Left cardiac atrium (tissue), 4 donors: ENCODE measurements at regions of chr1 and their contacts with region 1.

Region 1: DNA sequence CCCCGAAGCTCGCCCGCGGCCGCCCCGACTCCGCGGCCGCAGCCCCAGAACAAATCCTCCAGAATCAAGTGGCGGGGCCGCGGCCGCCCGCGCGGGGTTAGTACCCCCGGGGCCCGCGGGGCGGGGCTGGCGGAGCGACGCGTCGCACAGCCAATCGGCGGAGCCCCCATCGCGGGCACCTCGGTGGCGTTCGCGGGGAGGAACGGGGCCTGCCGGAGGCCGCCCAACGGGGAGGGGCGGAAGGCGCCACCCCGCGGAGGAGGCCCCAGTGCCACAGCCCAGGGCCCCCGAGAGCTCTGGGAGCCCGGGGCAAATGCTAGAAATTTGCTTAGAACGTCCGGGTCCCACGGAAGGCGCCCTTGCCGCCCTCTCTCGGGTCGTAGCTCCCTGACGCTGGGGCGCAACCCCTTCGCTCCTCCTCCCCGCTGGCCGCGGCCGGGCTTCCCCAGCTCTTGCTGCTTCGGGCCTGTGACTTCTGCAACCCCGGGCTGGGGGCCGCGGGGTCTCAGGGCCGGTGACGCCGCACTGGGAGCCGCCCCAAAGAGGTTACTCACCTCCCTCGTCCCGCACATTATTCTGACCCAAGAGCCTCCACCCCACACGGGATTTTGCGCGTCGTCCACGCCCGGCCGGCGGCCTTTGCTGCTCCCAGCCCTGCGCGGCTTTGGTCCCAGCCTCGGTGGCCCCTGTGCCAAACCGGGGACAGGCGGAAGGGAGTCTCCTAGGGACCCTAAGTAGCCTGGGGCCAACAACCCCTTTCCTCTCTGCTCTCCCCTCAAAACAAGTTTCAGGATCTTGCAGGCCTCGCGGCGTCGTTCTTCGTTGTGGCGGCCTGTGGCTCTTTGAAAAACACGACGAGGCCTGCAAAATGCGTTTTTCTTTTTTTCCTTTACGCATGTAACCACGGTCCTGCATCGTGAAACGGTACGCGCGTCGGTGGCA is at the start of gene RUNX3:
- DNase-seq: peak; percentile 67
- ATAC-seq: peak; percentile 68 to 71
- total RNA-seq, gene RUNX3: 1.3 to 2.4 TPM

Region 2: GRCh38 chr1:24910751-24911650 is 19.5 kb before region 1 on chr1:
- intact Hi-C with region 1: no loop called
- DNase-seq: no peak
- ATAC-seq: peak; percentile 20 to 48

Region 3: DNA sequence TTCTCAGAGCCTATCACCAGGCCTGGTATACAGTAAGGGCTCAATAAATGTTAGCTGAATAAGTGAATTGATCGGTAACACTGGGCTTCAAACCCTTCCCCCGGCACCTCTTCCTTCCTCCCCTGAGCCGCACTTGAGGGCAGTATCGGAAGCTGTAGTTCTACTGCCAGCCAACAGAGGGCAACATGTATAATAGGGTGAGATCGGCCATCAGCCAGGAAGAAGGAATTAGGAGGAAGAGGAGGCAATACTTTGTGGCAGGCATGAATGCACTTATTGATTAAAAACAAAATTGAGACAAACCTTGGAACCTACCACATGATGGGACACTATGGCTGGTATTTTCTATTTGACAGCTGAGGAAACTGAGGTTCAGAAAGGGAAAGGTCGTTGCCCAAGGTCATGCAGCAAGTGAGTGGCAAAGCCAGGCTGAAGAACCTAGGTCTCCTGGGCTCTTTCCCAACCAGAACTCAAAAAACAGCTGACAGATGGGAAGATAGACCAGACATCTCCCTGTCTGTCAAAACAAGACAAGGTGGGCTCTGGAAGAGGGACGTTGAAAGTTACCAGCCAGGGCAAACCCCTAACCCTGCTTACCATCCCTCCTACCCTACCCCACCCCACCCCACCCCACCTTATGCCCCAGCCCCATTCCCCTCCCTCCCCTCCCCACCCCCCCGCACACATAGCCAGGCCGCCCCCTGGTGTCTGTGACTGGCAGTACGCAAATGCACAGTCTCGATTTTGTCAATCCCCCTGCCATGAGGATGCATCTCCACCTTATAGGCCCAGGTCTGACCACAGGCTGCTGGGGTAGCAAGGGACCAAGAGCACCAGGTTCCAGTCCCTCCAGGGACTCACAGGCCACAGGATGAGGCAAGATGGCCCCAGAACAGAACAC is 106.9 kb after region 1 on chr1:
- intact Hi-C with region 1: loop called in 1 of 2 experiments (anchors 5 kb)
- DNase-seq: no peak
- ATAC-seq: peak in 1 of 2 donors; percentile 15

Region 4: DNA sequence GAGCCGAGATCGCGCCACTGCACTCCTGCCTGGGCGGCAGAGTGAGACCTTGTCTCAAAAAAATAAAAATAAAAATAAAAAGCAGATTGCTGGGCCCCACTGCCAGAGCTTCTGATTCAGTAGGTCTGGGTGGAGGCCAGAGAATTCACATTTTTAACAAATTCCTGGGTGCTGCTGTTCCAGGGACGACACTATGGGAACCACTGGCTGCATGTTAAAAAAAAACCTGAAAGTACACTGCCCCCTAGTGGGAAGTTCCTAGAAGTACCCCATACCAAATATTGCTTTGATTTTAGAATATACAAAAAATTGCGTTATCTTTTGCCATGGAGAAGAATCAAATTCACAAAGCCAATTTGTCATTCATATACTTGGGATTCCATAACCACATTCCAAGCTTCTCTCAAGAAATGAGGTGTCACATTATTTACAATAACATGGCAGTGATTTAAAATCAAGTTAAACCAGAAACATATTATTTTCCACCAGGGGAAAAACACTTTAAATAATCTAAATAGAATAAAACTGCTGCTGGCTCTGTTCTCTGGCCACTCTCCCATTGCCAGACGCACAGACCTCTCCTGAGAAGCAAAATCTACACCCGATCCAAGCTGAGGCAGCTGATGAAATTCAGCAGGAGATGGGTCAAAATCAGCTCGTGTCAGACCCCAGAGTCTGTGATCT is 274.5 kb after region 1 on chr1:
- intact Hi-C with region 1: loop called in 1 of 2 experiments (anchors 5 kb)
- DNase-seq: no peak
- ATAC-seq: peak; percentile 34 to 44